Adrenal gland (tissue), 19 donors: ENCODE measurements at regions of chr4 and their contacts with region 1.

Region 1: GRCh38 chr4:150063128-150063527 is 15.1 kb upstream of the DCLK2 start:
- DNase-seq: no peak
- H3K4me3 ChIP-seq: no peak overlapping the region
- H3K27ac ChIP-seq: peak overlapping the region in 1 of 5 donors; percentile 13
- H3K4me1 ChIP-seq: peaks cover 0 to 13% of the 10 kb centered on the region in 2 donors
- H3K27me3 ChIP-seq: no peaks in the 10 kb centered on the region
- CTCF ChIP-seq: no peak
- POLR2A ChIP-seq: no peak

Region 2: GRCh38 chr4:149031399-149031798 is 1031.7 kb before region 1 on chr4:
- intact Hi-C with region 1: no loop called
- DNase-seq: peak in 1 of 7 donors; percentile 21
- H3K4me3 ChIP-seq: no peak overlapping the region
- H3K27ac ChIP-seq: no peak overlapping the region
- H3K4me1 ChIP-seq: no peaks in the 10 kb centered on the region
- H3K27me3 ChIP-seq: no peaks in the 10 kb centered on the region
- CTCF ChIP-seq: peak; percentile 18 to 50 (median 40)
- POLR2A ChIP-seq: no peak

Region 3: GRCh38 chr4:150010525-150011126 is 52.5 kb before region 1 on chr4:
- intact Hi-C with region 1: loop called in 1 of 2 experiments (anchors 10 kb)
- DNase-seq: peak; percentile 27 to 80 (median 47)
- H3K4me3 ChIP-seq: no peak overlapping the region
- H3K27ac ChIP-seq: no peak overlapping the region
- H3K4me1 ChIP-seq: peaks cover 0 to 4% of the 10 kb centered on the region in 2 donors
- H3K27me3 ChIP-seq: no peaks in the 10 kb centered on the region
- CTCF ChIP-seq: peak; percentile 24 to 72 (median 61)
- POLR2A ChIP-seq: no peak